ENCODE measurements at regions of chr2 and their contacts with region 1.

Region 1: GRCh38 chr2:69436938-69437750 is at the start of gene NFU1:
- DNase-seq: peak; percentile 93
- H3K4me3 ChIP-seq: peak within 1 kb of the TSS; percentile 76
- H3K27ac ChIP-seq: peak within 1 kb of the TSS; percentile 75
- H3K4me1 ChIP-seq: peaks cover 13% of the 10 kb centered on the region
- CTCF ChIP-seq: peak; percentile 64
- total RNA-seq, gene NFU1: 15.4 and 17.1 TPM in 2 replicates

Region 2: GRCh38 chr2:69386789-69387734 is 50.1 kb before region 1 on chr2 and contains the start of gene GFPT1:
- CTCF ChIA-PET with region 1: interaction called, 3 read pairs
- POLR2A ChIA-PET with region 1: interaction called, 11 read pairs
- intact Hi-C with region 1: loop called (anchors 1 kb)
- DNase-seq: peak; percentile 92
- H3K4me3 ChIP-seq: peak within 1 kb of the TSS; percentile 90
- H3K27ac ChIP-seq: peak within 1 kb of the TSS; percentile 48
- H3K4me1 ChIP-seq: peaks cover 21% of the 10 kb centered on the region
- CTCF ChIP-seq: no peak
- total RNA-seq, gene GFPT1: 11.0 and 14.8 TPM in 2 replicates

Measured in OCI-LY7 (cell line).